ENCODE measurements at regions of chr18 and their contacts with region 1.

Region 1: GRCh38 chr18:45967007-45967706 is at the start of gene EPG5:
- DNase-seq: peak; percentile 72
- H3K4me3 ChIP-seq: peak within 1 kb of the TSS; percentile 97
- CTCF ChIP-seq: no peak

Region 2: DNA sequence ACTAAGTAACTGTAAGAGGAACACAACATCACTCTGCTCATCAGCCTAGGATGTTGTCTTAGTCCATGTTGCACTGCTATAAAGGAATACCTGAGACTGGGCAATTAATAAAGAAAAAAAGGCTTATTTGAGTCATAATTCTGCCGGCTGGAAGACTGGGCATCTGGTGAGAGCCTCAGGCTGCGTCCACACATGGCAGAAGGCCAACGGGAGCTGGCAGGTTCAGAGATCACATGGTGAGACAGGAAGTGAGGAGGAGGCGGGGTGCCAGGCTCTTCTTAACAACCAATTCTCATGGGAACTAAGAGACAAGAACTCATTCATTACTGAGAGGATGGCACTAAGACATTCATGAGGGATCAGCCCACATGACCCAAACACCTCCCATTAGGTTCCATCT is 46.8 kb before region 1 on chr18:
- CTCF ChIA-PET with region 1: interaction called, 10 read pairs
- POLR2A ChIA-PET with region 1: no interaction called
- DNase-seq: peak; percentile 14
- H3K4me3 ChIP-seq: no peak overlapping the region
- CTCF ChIP-seq: no peak

Region 3: DNA sequence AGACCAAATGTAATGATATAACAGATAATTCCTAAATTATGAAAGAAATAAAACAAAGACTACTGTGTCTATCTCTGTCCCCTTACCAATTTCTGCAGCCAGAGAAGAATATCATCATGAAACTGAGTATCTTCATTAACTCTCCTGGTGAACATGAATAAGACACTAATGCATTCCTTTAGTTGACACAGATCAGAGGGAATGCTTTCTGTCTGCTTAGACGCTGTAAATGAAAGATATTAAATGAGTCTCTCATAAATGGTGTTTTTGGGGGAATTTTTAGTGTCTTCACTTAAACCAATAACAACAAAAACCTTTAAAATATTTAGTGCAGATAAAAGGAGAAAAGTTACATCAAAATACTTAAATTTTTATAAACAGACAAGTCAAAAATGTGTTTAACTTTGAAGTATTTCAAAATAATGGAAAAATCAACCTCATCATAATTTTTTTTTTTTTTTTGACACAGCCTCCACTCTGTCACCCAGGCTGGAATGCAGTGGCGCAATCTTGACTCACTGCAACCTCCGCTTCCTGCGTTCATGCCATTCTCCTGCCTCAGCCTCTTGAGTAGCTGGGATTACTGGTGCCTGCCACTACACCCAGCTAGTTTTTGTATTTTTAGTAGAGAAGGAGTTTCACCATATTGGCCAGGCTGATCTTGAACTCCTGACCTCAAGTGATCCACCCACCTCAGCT is 16.0 kb before region 1 on chr18:
- CTCF ChIA-PET with region 1: interaction called, 10 read pairs
- POLR2A ChIA-PET with region 1: interaction called, 12 read pairs
- DNase-seq: peak; percentile 58
- H3K4me3 ChIP-seq: no peak overlapping the region
- CTCF ChIP-seq: no peak

Measured in AG04449 (cell line).